Activated T-helper 2 cell treated with anti-CD3 and anti-CD28 coated beads, Interferon-gamma antibody, Interleukin-2, Interleukin-4, amounts not matched to agents 10 μg/mL and 5 μg/mL and 100 μg/mL, durations not matched to agents 14 hours and 24 hours and 36 hours (primary cell): ENCODE measurements at regions of chr11 and their contacts with region 1.

Region 1: GRCh38 chr11:64317957-64318693 is at the start of gene PRDX5:
- DNase-seq: peak; percentile 95
- H3K4me3 Mint-ChIP-seq: peak within 1 kb of the TSS; percentile 96
- H3K27ac Mint-ChIP-seq: peak within 1 kb of the TSS; percentile 99
- H3K4me1 Mint-ChIP-seq: peaks cover 30% of the 10 kb centered on the region
- H3K27me3 Mint-ChIP-seq: no peaks in the 10 kb centered on the region
- total RNA-seq, gene PRDX5: 112 and 118 TPM in 2 replicates

Region 2: GRCh38 chr11:64240394-64241174 is 77.5 kb before region 1 on chr11 and contains the start of gene FKBP2:
- intact Hi-C with region 1: loop called (anchors 1 kb)
- DNase-seq: peak; percentile 98
- H3K4me3 Mint-ChIP-seq: peak within 1 kb of the TSS; percentile 94
- H3K27ac Mint-ChIP-seq: peak within 1 kb of the TSS; percentile 93
- H3K4me1 Mint-ChIP-seq: peaks cover 21% of the 10 kb centered on the region
- H3K27me3 Mint-ChIP-seq: no peaks in the 10 kb centered on the region
- total RNA-seq, gene FKBP2: 36.6 and 37.1 TPM in 2 replicates

Region 3: GRCh38 chr11:64269380-64270234 is 48.5 kb before region 1 on chr11:
- intact Hi-C with region 1: loop called (anchors 1 kb)
- DNase-seq: peak; percentile 97
- H3K4me3 Mint-ChIP-seq: peak overlapping the region; percentile 91
- H3K27ac Mint-ChIP-seq: peak overlapping the region; percentile 84
- H3K4me1 Mint-ChIP-seq: peaks cover 15% of the 10 kb centered on the region
- H3K27me3 Mint-ChIP-seq: no peaks in the 10 kb centered on the region

Region 4: GRCh38 chr11:64284048-64284961 is 33.8 kb before region 1 on chr11 and contains the start of gene BAD:
- intact Hi-C with region 1: loop called (anchors 1 kb)
- DNase-seq: peak; percentile 88
- H3K4me3 Mint-ChIP-seq: peak within 1 kb of the TSS; percentile 85
- H3K27ac Mint-ChIP-seq: peak within 1 kb of the TSS; percentile 93
- H3K4me1 Mint-ChIP-seq: peaks cover 9% of the 10 kb centered on the region
- H3K27me3 Mint-ChIP-seq: no peaks in the 10 kb centered on the region
- total RNA-seq, gene BAD: 33.2 and 34.7 TPM in 2 replicates

Region 5: GRCh38 chr11:64331557-64332371 is 13.6 kb after region 1 on chr11:
- intact Hi-C with region 1: loop called (anchors 2 kb)
- DNase-seq: peak; percentile 65
- H3K4me3 Mint-ChIP-seq: no peak overlapping the region
- H3K27ac Mint-ChIP-seq: peak overlapping the region; percentile 83
- H3K4me1 Mint-ChIP-seq: peaks cover 15% of the 10 kb centered on the region
- H3K27me3 Mint-ChIP-seq: no peaks in the 10 kb centered on the region

Region 6: GRCh38 chr11:64358907-64359711 is 41.0 kb after region 1 on chr11 and contains the start of gene RPS6KA4:
- intact Hi-C with region 1: loop called (anchors 1 kb)
- DNase-seq: peak; percentile 54
- H3K4me3 Mint-ChIP-seq: peak within 1 kb of the TSS; percentile 91
- H3K27ac Mint-ChIP-seq: peak within 1 kb of the TSS; percentile 83
- H3K4me1 Mint-ChIP-seq: peaks cover 21% of the 10 kb centered on the region
- H3K27me3 Mint-ChIP-seq: no peaks in the 10 kb centered on the region
- total RNA-seq, gene RPS6KA4: 38.7 and 43.7 TPM in 2 replicates

Region 7: GRCh38 chr11:64659417-64660144 is 341.5 kb after region 1 on chr11:
- intact Hi-C with region 1: no loop called
- DNase-seq: no peak
- H3K4me3 Mint-ChIP-seq: no peak overlapping the region
- H3K27ac Mint-ChIP-seq: no peak overlapping the region
- H3K4me1 Mint-ChIP-seq: peaks cover 16% of the 10 kb centered on the region
- H3K27me3 Mint-ChIP-seq: peaks cover 5% of the 10 kb centered on the region